Mammary epithelial cell (primary cell): ENCODE measurements at regions of chr2 and their contacts with region 1.

Region 1: DNA sequence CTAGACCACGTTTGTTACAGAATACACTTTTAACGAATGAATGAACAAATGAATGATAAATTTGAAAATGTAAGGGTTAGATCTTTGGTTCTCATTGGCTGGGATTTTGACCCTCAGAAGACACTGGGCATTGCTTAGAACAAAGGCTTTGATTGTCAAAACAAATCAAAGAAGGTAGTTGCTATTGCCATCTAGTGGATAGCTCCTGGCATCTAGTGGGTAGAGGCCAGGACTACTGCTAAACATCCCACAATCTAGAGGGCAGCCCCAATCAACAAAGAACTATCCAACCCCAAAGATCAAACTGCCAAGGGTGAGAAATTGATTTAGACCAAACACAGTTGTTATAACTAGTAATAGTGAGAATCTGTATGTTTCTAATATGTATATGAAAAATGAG is 552.3 kb downstream of the KCNJ3 start:
- DNase-seq: peak; percentile 19
- H3K4me3 ChIP-seq: no peak overlapping the region
- H3K27ac ChIP-seq: no peak overlapping the region
- H3K4me1 ChIP-seq: no peaks in the 10 kb centered on the region
- H3K27me3 ChIP-seq: no peaks in the 10 kb centered on the region
- CTCF ChIP-seq: peak; percentile 35 to 55

Region 2: GRCh38 chr2:154623819-154624218 is 627.0 kb before region 1 on chr2:
- CTCF ChIA-PET with region 1: no interaction called
- dilution Hi-C with region 1: no loop called
- in situ Hi-C with region 1: no loop called
- intact Hi-C with region 1: loop called (anchors 1 kb)
- DNase-seq: peak; percentile 21
- H3K4me3 ChIP-seq: no peak overlapping the region
- H3K27ac ChIP-seq: no peak overlapping the region
- H3K4me1 ChIP-seq: no peaks in the 10 kb centered on the region
- H3K27me3 ChIP-seq: no peaks in the 10 kb centered on the region
- CTCF ChIP-seq: peak; percentile 64 to 76

Region 3: GRCh38 chr2:155157071-155157470 is 93.7 kb before region 1 on chr2:
- CTCF ChIA-PET with region 1: no interaction called
- dilution Hi-C with region 1: no loop called
- in situ Hi-C with region 1: no loop called
- intact Hi-C with region 1: no loop called
- DNase-seq: no peak
- H3K4me3 ChIP-seq: no peak overlapping the region
- H3K27ac ChIP-seq: no peak overlapping the region
- H3K4me1 ChIP-seq: no peaks in the 10 kb centered on the region
- H3K27me3 ChIP-seq: no peaks in the 10 kb centered on the region
- CTCF ChIP-seq: no peak

Region 4: GRCh38 chr2:155377266-155377680 is 126.5 kb after region 1 on chr2:
- CTCF ChIA-PET with region 1: no interaction called
- dilution Hi-C with region 1: no loop called
- in situ Hi-C with region 1: no loop called
- intact Hi-C with region 1: no loop called
- DNase-seq: peak; percentile 5
- H3K4me3 ChIP-seq: no peak overlapping the region
- H3K27ac ChIP-seq: no peak overlapping the region
- H3K4me1 ChIP-seq: no peaks in the 10 kb centered on the region
- H3K27me3 ChIP-seq: no peaks in the 10 kb centered on the region
- CTCF ChIP-seq: peak; percentile 19 to 40